RWPE1 (cell line): ENCODE measurements at regions of chr12 and their contacts with region 1.

Region 1: DNA sequence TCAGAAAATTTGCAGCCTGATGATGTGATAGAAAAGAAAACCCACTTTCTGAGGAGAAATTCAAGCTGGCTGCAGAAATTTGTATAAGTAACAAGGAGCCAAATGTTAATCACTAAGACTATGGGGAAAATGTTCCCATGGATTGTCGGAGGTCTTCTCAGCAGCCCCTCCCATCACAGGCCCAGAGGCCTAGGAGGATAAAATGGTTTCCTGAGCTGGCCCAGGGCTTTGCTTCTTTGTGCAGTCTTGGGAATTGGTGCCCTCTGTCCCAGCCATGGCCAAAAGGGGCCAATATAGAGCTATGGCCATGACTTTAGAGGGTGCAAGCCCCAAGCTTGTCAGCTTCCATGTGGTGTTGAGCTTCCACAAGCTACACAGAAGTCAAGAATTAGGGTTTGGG is 335.9 kb downstream of the ATP23 start:
- DNase-seq: no peak
- H3K27ac ChIP-seq: no peak overlapping the region
- CTCF ChIP-seq: no peak

Region 2: DNA sequence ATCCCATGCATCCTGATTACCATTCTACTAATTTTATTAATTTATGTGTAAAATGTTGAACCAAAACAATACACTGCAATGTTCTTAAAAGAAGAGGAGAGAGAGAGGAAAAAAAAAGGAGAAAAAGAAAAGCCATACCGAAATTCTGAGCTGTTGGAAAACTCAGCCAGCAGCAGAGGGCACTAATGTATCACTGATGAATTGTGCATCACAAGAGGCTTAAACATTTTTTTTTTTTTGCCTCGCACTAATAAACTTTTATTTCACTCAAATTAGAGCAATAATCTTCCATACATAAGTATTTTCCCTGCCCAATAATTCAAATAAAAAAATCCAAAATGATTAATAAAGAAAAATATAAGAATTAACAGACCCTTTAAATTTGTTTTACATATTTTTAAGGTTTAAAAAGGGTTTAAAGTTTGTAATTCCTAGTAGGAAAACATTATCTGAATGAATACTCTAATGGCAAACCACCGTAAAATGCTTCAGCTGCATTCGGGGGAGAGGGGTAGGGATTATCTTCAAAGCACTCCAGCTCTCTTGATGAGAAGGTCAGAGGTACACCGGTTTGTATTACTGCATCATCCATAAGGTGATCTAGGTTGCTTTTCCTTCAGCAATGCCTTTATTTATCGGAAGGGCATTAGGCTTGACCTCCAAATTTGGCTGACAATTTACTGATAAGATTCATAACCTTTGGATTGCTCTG is 293.9 kb before region 1 on chr12:
- CTCF ChIA-PET with region 1: interaction called, 10 read pairs
- POLR2A ChIA-PET with region 1: no interaction called
- DNase-seq: peak; percentile 16
- H3K27ac ChIP-seq: no peak overlapping the region
- CTCF ChIP-seq: peak; percentile 78

Region 3: GRCh38 chr12:58233886-58234285 is 43.3 kb before region 1 on chr12:
- CTCF ChIA-PET with region 1: no interaction called
- POLR2A ChIA-PET with region 1: no interaction called
- DNase-seq: no peak
- H3K27ac ChIP-seq: no peak overlapping the region
- CTCF ChIP-seq: no peak

Region 4: DNA sequence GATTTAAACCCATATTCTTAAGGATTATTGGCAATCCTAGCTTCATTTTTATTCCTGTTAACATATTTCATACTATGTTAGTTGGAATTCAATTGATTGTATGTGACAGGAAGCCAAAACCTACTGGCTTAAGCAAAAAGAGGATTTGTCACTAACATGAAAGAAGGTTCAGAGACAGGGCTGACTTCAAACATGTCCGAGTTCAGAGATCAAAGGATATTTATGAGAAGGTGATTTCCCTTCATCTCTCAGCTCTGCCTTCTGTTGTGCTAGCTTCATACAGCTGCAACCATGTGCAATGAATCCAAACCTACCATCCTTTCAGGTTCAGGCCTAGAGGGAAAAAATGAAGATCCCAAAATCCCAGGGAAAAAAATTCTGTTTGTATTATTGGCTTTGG is 13.9 kb after region 1 on chr12:
- CTCF ChIA-PET with region 1: no interaction called
- POLR2A ChIA-PET with region 1: no interaction called
- DNase-seq: no peak
- H3K27ac ChIP-seq: no peak overlapping the region
- CTCF ChIP-seq: no peak